CD4-positive, alpha-beta memory T cell (primary cell): ENCODE measurements at regions of chr9 and their contacts with region 1.

Region 1: GRCh38 chr9:2872257-2872935 is 28.5 kb upstream of the PUM3 start:
- DNase-seq: peak in 3 of 5 donors; percentile 31 to 52 (median 47)
- H3K4me3 ChIP-seq: no peak overlapping the region
- H3K4me3 Mint-ChIP-seq: peak overlapping the region in 5 of 8 donors; percentile 11 to 32 (median 26)
- H3K27ac ChIP-seq: no peak overlapping the region
- H3K27ac Mint-ChIP-seq: peak overlapping the region in 6 of 7 donors; percentile 18 to 82 (median 64)
- H3K4me1 ChIP-seq: no peaks in the 10 kb centered on the region
- H3K4me1 Mint-ChIP-seq: peaks cover 6 to 14% (median 8%) of the 10 kb centered on the region in 4 donors
- H3K27me3 ChIP-seq: no peaks in the 10 kb centered on the region
- H3K27me3 Mint-ChIP-seq: peaks cover 9 to 21% of the 10 kb centered on the region in 2 donors

Region 2: GRCh38 chr9:2809691-2810433 is 62.5 kb before region 1 on chr9:
- CTCF ChIA-PET with region 1: no interaction called
- POLR2A ChIA-PET with region 1: no interaction called
- intact Hi-C with region 1: loop called (anchors 10 kb)
- DNase-seq: no peak
- H3K4me3 ChIP-seq: no peak overlapping the region
- H3K4me3 Mint-ChIP-seq: no peak overlapping the region
- H3K27ac ChIP-seq: no peak overlapping the region
- H3K27ac Mint-ChIP-seq: no peak overlapping the region
- H3K4me1 ChIP-seq: no peaks in the 10 kb centered on the region
- H3K4me1 Mint-ChIP-seq: peaks cover 0 to 1% (median 0%) of the 10 kb centered on the region in 4 donors
- H3K27me3 ChIP-seq: no peaks in the 10 kb centered on the region
- H3K27me3 Mint-ChIP-seq: no peaks in the 10 kb centered on the region

Region 3: GRCh38 chr9:2889023-2889422 is 16.6 kb after region 1 on chr9:
- CTCF ChIA-PET with region 1: no interaction called
- POLR2A ChIA-PET with region 1: no interaction called
- intact Hi-C with region 1: no loop called
- DNase-seq: no peak
- H3K4me3 ChIP-seq: no peak overlapping the region
- H3K4me3 Mint-ChIP-seq: no peak overlapping the region
- H3K27ac ChIP-seq: no peak overlapping the region
- H3K27ac Mint-ChIP-seq: no peak overlapping the region
- H3K4me1 ChIP-seq: no peaks in the 10 kb centered on the region
- H3K4me1 Mint-ChIP-seq: no peaks in the 10 kb centered on the region
- H3K27me3 ChIP-seq: no peaks in the 10 kb centered on the region
- H3K27me3 Mint-ChIP-seq: peaks cover 12 to 25% of the 10 kb centered on the region in 2 donors

Region 4: DNA sequence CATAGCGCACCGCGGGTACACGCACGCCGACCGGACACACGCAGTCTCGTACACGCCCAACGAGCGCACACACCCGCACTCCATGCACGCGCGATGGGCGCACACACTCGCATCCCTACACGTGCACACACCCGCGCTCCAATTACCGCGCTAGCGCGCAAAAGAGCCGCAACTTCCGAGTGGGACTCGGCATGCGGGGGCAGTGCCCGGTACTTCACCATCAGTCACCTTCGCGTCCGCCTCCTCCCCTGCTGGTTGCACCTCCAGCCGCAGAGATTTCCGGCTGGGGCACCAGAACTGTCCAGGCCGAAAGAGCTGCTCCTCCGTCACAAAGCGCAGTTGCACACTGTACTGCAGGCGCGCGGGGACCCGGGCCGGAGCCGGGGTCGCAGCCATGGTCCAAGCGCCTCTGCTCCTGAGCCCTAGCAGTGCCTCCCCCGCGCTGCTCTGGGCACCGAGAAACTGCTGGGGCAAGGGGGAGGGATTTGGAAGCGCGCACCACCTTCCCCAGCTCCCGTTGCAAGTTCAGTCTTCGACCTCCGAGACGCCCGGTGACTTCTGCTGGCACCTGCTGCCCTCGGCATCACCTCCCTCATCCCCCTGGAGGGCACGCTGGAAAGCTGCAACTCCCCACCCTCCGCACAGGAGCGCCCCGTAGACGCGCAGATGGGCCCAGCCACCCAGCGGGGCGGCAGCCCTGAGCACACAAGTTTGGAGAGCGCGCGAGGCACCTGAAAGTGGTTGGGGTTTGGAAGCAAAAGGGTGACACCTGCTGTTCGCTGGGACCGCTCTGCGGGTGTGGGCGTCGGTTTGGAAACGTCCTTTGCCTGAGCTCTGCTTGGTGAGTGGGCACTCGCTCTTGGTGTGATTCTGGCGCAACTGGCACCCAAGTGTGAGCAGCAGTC is 308.9 kb after region 1 on chr9:
- CTCF ChIA-PET with region 1: no interaction called
- POLR2A ChIA-PET with region 1: no interaction called
- intact Hi-C with region 1: loop called (anchors 2 kb)
- DNase-seq: peak in 4 of 5 donors; percentile 3 to 26 (median 20)
- H3K4me3 ChIP-seq: no peak overlapping the region
- H3K4me3 Mint-ChIP-seq: peak overlapping the region in 7 of 8 donors; percentile 16 to 72 (median 47)
- H3K27ac ChIP-seq: no peak overlapping the region
- H3K27ac Mint-ChIP-seq: no peak overlapping the region
- H3K4me1 ChIP-seq: no peaks in the 10 kb centered on the region
- H3K4me1 Mint-ChIP-seq: peaks cover 0 to 18% (median 6%) of the 10 kb centered on the region in 4 donors
- H3K27me3 ChIP-seq: no peaks in the 10 kb centered on the region
- H3K27me3 Mint-ChIP-seq: peaks cover 21 to 22% of the 10 kb centered on the region in 2 donors

Region 5: GRCh38 chr9:3250741-3251140 is 378.3 kb after region 1 on chr9:
- CTCF ChIA-PET with region 1: no interaction called
- POLR2A ChIA-PET with region 1: no interaction called
- intact Hi-C with region 1: no loop called
- DNase-seq: no peak
- H3K4me3 ChIP-seq: no peak overlapping the region
- H3K4me3 Mint-ChIP-seq: no peak overlapping the region
- H3K27ac ChIP-seq: no peak overlapping the region
- H3K27ac Mint-ChIP-seq: no peak overlapping the region
- H3K4me1 ChIP-seq: no peaks in the 10 kb centered on the region
- H3K4me1 Mint-ChIP-seq: no peaks in the 10 kb centered on the region
- H3K27me3 ChIP-seq: no peaks in the 10 kb centered on the region
- H3K27me3 Mint-ChIP-seq: no peaks in the 10 kb centered on the region

Region 6: GRCh38 chr9:3441197-3441816 is 568.9 kb after region 1 on chr9:
- CTCF ChIA-PET with region 1: no interaction called
- POLR2A ChIA-PET with region 1: no interaction called
- intact Hi-C with region 1: loop called (anchors 1 kb)
- DNase-seq: peak; percentile 31 to 50 (median 44)
- H3K4me3 ChIP-seq: no peak overlapping the region
- H3K4me3 Mint-ChIP-seq: no peak overlapping the region
- H3K27ac ChIP-seq: no peak overlapping the region
- H3K27ac Mint-ChIP-seq: peak overlapping the region in 1 of 7 donors; percentile 62
- H3K4me1 ChIP-seq: no peaks in the 10 kb centered on the region
- H3K4me1 Mint-ChIP-seq: peaks cover 3 to 10% (median 6%) of the 10 kb centered on the region in 4 donors
- H3K27me3 ChIP-seq: no peaks in the 10 kb centered on the region
- H3K27me3 Mint-ChIP-seq: no peaks in the 10 kb centered on the region